ENCODE measurements at regions of chr5 and their contacts with region 1.

Region 1: GRCh38 chr5:146059460-146060220 is 45.7 kb downstream of the PLAC8L1 start:
- DNase-seq: no peak

Region 2: GRCh38 chr5:145975361-145976066 is 84.1 kb before region 1 on chr5:
- intact Hi-C with region 1: loop called (anchors 5 kb)
- DNase-seq: no peak

Region 3: GRCh38 chr5:146071171-146071570 is 11.5 kb after region 1 on chr5:
- intact Hi-C with region 1: loop called (anchors 1 kb)
- DNase-seq: no peak

Region 4: DNA sequence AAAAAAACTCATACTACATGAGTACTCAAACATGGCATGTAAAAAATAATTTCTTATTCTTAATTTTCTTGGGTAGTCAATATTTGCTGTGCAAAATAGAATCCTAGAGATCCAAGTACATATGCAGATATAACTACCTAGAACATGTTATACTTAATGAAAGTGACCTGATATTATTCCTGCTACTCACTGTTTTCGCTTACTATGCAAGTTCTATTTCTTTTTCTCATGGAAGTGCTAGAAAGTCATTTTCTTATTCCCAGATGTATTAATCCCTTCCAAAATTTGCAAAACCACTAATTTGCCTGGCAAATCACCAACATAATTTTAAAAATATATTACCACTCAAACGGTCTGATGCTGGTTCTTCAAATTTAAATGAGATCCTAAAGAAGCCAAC is 64.9 kb after region 1 on chr5:
- intact Hi-C with region 1: loop called (anchors 2 kb)
- DNase-seq: no peak